MCF 10A (cell line): ENCODE measurements at regions of chr15 and their contacts with region 1.

Region 1: GRCh38 chr15:49620658-49621368 is at the starts of genes DTWD1 and FAM227B:
- DNase-seq: peak; percentile 96
- H3K4me3 Mint-ChIP-seq: peak within 1 kb of the TSS; percentile 92
- H3K27ac Mint-ChIP-seq: peak within 1 kb of the TSS; percentile 98
- H3K4me1 Mint-ChIP-seq: peaks cover 23% of the 10 kb centered on the region
- H3K27me3 Mint-ChIP-seq: no peaks in the 10 kb centered on the region
- CTCF ChIP-seq: no peak
- total RNA-seq, gene DTWD1: 29.6 and 31.0 TPM in 2 replicates
- total RNA-seq, gene FAM227B: 5.8 and 6.4 TPM in 2 replicates

Region 2: DNA sequence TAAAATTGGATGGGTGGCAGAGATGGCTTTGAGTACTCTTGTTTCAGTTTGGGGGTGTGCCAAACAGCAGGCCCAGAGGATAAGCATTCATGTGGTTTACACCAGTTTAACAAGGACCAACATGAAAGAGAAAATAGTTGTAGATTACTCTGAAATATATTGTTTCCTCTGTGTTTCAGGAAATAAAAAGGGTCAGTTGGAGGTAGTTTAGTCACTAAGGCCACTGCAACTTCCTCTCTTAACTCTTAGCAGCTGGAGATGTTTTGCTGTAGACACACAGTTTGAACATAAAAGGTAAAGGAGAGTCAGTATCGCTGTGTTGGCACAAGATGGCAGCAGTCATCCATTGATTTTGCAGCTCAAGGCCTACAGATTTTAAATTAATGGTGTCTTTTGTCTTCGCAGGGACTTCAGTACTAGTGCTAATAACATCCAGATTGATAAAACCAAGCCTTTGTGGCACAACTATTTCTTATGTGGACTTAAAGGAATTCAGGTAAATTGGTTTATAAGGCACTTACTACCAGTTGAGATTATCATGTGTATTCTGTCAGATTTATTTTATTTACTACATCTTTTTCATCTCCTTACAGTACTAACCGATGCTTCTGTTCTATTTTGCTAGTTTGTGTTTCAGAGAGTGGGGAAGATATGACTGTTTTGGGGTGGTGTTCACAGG is 385.2 kb before region 1 on chr15:
- CTCF ChIA-PET with region 1: no interaction called
- POLR2A ChIA-PET with region 1: no interaction called
- intact Hi-C with region 1: loop called (anchors 2 kb)
- DNase-seq: peak; percentile 69
- H3K4me3 Mint-ChIP-seq: no peak overlapping the region
- H3K27ac Mint-ChIP-seq: peak overlapping the region; percentile 35
- H3K4me1 Mint-ChIP-seq: peaks cover 9% of the 10 kb centered on the region
- H3K27me3 Mint-ChIP-seq: no peaks in the 10 kb centered on the region
- CTCF ChIP-seq: peak; percentile 74

Region 3: GRCh38 chr15:49492824-49493223 is 128.0 kb before region 1 on chr15:
- CTCF ChIA-PET with region 1: no interaction called
- POLR2A ChIA-PET with region 1: interaction called, 3 read pairs
- intact Hi-C with region 1: loop called (anchors 10 kb)
- DNase-seq: peak; percentile 79
- H3K4me3 Mint-ChIP-seq: no peak overlapping the region
- H3K27ac Mint-ChIP-seq: peak overlapping the region; percentile 43
- H3K4me1 Mint-ChIP-seq: peaks cover 40% of the 10 kb centered on the region
- H3K27me3 Mint-ChIP-seq: no peaks in the 10 kb centered on the region
- CTCF ChIP-seq: no peak

Region 4: GRCh38 chr15:49793943-49794342 is 173.1 kb after region 1 on chr15:
- CTCF ChIA-PET with region 1: no interaction called
- POLR2A ChIA-PET with region 1: no interaction called
- intact Hi-C with region 1: no loop called
- DNase-seq: no peak
- H3K4me3 Mint-ChIP-seq: no peak overlapping the region
- H3K27ac Mint-ChIP-seq: no peak overlapping the region
- H3K4me1 Mint-ChIP-seq: no peaks in the 10 kb centered on the region
- H3K27me3 Mint-ChIP-seq: no peaks in the 10 kb centered on the region
- CTCF ChIP-seq: no peak

Region 5: GRCh38 chr15:49863431-49864205 is 242.8 kb after region 1 on chr15:
- CTCF ChIA-PET with region 1: interaction called, 3 read pairs
- POLR2A ChIA-PET with region 1: interaction called, 21 read pairs
- intact Hi-C with region 1: loop called (anchors 5 kb)
- DNase-seq: peak; percentile 88
- H3K4me3 Mint-ChIP-seq: peak overlapping the region; percentile 21
- H3K27ac Mint-ChIP-seq: peak overlapping the region; percentile 90
- H3K4me1 Mint-ChIP-seq: peaks cover 21% of the 10 kb centered on the region
- H3K27me3 Mint-ChIP-seq: no peaks in the 10 kb centered on the region
- CTCF ChIP-seq: no peak

Region 6: GRCh38 chr15:50003786-50004334 is 383.0 kb after region 1 on chr15:
- CTCF ChIA-PET with region 1: no interaction called
- POLR2A ChIA-PET with region 1: interaction called, 3 read pairs
- intact Hi-C with region 1: loop called (anchors 2 kb)
- DNase-seq: peak; percentile 85
- H3K4me3 Mint-ChIP-seq: no peak overlapping the region
- H3K27ac Mint-ChIP-seq: peak overlapping the region; percentile 25
- H3K4me1 Mint-ChIP-seq: no peaks in the 10 kb centered on the region
- H3K27me3 Mint-ChIP-seq: no peaks in the 10 kb centered on the region
- CTCF ChIP-seq: peak; percentile 67

Region 7: GRCh38 chr15:50134520-50135024 is 513.8 kb after region 1 on chr15:
- CTCF ChIA-PET with region 1: no interaction called
- POLR2A ChIA-PET with region 1: no interaction called
- intact Hi-C with region 1: loop called (anchors 10 kb)
- DNase-seq: peak; percentile 62
- H3K4me3 Mint-ChIP-seq: peak overlapping the region; percentile 1
- H3K27ac Mint-ChIP-seq: peak overlapping the region; percentile 59
- H3K4me1 Mint-ChIP-seq: peaks cover 41% of the 10 kb centered on the region
- H3K27me3 Mint-ChIP-seq: no peaks in the 10 kb centered on the region
- CTCF ChIP-seq: no peak